Activated CD8-positive, alpha-beta memory T cell treated with anti-CD3 and anti-CD28 coated beads, Interleukin-2, amount 10 ng/mL, durations not matched to agents 7 days and 5 days (primary cell): ENCODE measurements at regions of chr6 and their contacts with region 1.

Region 1: GRCh38 chr6:105087571-105088211 is 92.1 kb downstream of the POPDC3 start:
- DNase-seq: peak; percentile 44
- ATAC-seq: no peak
- H3K4me3 Mint-ChIP-seq: no peak overlapping the region
- H3K27ac Mint-ChIP-seq: no peak overlapping the region
- H3K4me1 Mint-ChIP-seq: no peaks in the 10 kb centered on the region
- H3K27me3 Mint-ChIP-seq: peaks cover 11% of the 10 kb centered on the region

Region 2: GRCh38 chr6:105121981-105122380 is 34.3 kb after region 1 on chr6:
- CTCF ChIA-PET with region 1: no interaction called
- DNase-seq: no peak
- ATAC-seq: no peak
- H3K4me3 Mint-ChIP-seq: no peak overlapping the region
- H3K27ac Mint-ChIP-seq: no peak overlapping the region
- H3K4me1 Mint-ChIP-seq: no peaks in the 10 kb centered on the region
- H3K27me3 Mint-ChIP-seq: peaks cover 34% of the 10 kb centered on the region

Region 3: GRCh38 chr6:105397987-105398386 is 310.3 kb after region 1 on chr6:
- CTCF ChIA-PET with region 1: interaction called, 24 read pairs
- DNase-seq: no peak
- ATAC-seq: no peak
- H3K4me3 Mint-ChIP-seq: no peak overlapping the region
- H3K27ac Mint-ChIP-seq: peak overlapping the region; percentile 50
- H3K4me1 Mint-ChIP-seq: peaks cover 46% of the 10 kb centered on the region
- H3K27me3 Mint-ChIP-seq: no peaks in the 10 kb centered on the region

Region 4: DNA sequence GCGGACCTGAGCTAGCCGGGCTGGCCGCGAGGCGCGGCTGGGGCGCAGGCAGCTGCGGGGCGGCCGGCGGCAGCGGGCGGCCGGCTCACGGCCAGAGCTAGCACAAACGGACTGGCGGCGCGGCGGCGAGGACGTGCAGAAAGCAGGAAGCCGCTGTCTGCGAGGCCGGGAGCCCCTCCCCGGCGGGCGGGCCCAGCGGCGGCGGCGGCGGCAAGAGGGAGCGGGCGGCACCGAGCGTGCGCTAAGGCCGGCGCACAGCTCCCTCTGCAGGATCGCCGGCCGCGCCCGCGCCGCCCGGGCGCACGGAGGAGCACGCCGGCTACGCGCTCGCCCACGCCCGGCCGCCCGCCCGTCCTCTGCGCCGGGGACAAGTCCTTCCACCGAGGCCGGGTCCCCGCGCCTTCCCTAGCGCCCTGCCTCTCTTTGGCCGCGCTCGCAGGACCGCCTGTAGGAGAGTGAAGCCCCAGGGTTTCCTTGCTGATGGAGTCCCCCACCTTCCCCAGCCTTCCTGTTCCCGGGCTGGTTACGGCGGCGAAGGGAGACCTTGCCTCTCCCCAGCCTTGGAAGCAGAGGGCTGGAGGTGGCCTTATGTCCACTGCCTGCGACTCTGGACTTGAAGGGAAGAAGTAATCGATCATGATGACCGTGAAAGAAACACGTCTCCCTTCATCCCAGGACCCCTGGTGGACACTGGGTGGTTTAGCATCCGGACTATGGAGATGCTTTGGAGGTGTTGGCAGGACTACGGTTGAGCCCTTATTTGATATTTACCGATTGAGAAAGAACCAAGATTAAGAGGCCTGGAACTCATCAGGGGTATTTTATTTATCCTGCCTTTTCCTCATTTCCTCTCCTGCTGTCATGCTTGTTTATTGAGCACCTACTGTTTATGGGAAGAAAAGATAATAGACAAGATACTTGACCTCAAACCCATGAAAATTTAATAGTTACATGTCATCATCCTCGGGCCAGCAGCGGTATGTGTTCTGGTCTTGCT is 315.5 kb after region 1 on chr6 and contains the start of gene PREP:
- CTCF ChIA-PET with region 1: interaction called, 24 read pairs
- DNase-seq: peak; percentile 89
- ATAC-seq: peak; percentile 95
- H3K4me3 Mint-ChIP-seq: peak within 1 kb of the TSS; percentile 86
- H3K27ac Mint-ChIP-seq: peak within 1 kb of the TSS; percentile 79
- H3K4me1 Mint-ChIP-seq: peaks cover 51% of the 10 kb centered on the region
- H3K27me3 Mint-ChIP-seq: peaks cover 13% of the 10 kb centered on the region
- total RNA-seq, gene PREP: 44.1 to 52.9 TPM

Region 5: DNA sequence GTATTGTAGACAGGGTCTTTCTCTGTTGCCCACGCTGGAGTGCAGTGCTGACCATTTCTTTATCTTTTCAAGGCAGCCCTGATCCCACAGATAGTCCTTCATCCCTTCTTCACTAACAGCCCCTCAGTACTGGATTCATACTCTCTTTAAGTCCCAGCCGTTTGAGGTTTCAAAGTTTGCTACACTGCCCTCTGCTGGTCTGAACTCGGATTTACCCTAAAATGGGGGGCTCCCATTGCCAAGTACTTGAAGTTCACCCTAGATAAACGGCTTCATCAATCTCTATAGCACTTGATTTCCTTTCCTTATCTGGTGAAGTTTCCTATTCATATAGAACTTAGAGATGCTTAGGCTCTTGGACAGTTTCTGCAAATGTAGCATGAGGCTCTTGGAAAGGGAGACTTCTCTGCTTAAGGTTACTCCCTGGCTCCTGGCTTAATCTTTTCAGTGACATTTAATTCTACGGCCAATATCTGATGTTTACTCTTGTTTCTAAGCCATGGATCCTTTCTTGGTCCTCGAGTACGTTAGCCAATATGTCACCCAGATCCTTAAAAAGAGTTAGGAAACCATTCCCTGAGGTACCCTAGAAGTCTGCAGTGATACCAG is 336.6 kb after region 1 on chr6:
- CTCF ChIA-PET with region 1: interaction called, 12 read pairs
- DNase-seq: peak; percentile 74
- ATAC-seq: peak; percentile 75
- H3K4me3 Mint-ChIP-seq: no peak overlapping the region
- H3K27ac Mint-ChIP-seq: no peak overlapping the region
- H3K4me1 Mint-ChIP-seq: peaks cover 3% of the 10 kb centered on the region
- H3K27me3 Mint-ChIP-seq: peaks cover 6% of the 10 kb centered on the region